CD4-positive, alpha-beta T cell (primary cell): ENCODE measurements at regions of chr15 and their contacts with region 1.

Region 1: GRCh38 chr15:64507293-64507802 is 47.0 kb downstream of the ZNF609 start:
- DNase-seq: peak in 11 of 14 experiments; percentile 5 to 60 (median 22)
- ATAC-seq: peak; percentile 67
- H3K4me3 ChIP-seq: no peak overlapping the region
- H3K4me3 Mint-ChIP-seq: peak overlapping the region; percentile 34
- H3K27ac ChIP-seq: peak overlapping the region; percentile 18 to 34
- H3K27ac Mint-ChIP-seq: peak overlapping the region; percentile 89
- H3K4me1 ChIP-seq: peaks cover 41% of the 10 kb centered on the region
- H3K4me1 Mint-ChIP-seq: peaks cover 87% of the 10 kb centered on the region
- H3K27me3 ChIP-seq: no peaks in the 10 kb centered on the region
- H3K27me3 Mint-ChIP-seq: no peaks in the 10 kb centered on the region
- CTCF ChIP-seq: no peak

Region 2: DNA sequence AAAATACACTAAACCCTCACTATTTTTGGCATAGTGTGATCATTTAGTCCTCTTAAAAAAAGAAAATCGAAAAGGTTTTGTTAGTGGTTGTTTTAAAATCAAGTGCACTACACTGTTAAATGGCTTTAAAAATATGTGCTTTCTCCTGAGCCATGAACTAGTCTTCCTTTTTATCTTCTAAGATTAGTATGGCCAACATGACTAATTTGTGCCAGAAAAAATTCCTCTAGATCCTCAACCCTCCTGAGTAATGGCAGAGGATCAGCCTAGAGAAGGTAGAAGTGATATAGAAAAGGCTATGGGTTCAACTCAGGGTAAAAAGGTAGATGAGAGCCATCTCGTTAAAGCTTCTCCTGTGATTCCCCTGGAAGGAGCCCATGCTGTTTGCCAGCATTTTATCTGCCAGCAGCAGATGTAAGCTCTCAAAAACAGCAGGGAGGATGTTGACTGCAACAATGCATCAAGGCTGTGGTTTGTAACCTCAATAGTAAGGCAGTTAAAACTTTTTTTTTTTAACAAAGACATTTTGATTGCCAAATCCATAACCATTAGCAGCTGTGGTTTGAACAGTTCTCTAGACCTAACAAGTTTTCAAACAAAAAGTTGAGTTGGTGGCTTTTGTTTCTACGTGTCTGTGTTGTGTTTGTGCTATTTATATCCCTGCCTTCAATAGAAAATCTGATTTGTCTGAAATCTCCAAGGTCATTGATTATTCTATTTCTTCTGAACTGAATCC is 77.2 kb before region 1 on chr15:
- CTCF ChIA-PET with region 1: no interaction called
- POLR2A ChIA-PET with region 1: interaction called, 12 read pairs
- intact Hi-C with region 1: loop called in 1 of 2 experiments (anchors 2 kb)
- DNase-seq: peak in 13 of 14 experiments; percentile 17 to 85 (median 37)
- ATAC-seq: peak; percentile 91
- H3K4me3 ChIP-seq: peak overlapping the region; percentile 12
- H3K4me3 Mint-ChIP-seq: peak overlapping the region; percentile 79
- H3K27ac ChIP-seq: peak overlapping the region; percentile 31 to 52
- H3K27ac Mint-ChIP-seq: peak overlapping the region; percentile 97
- H3K4me1 ChIP-seq: peaks cover 36% of the 10 kb centered on the region
- H3K4me1 Mint-ChIP-seq: peaks cover 52% of the 10 kb centered on the region
- H3K27me3 ChIP-seq: no peaks in the 10 kb centered on the region
- H3K27me3 Mint-ChIP-seq: no peaks in the 10 kb centered on the region
- CTCF ChIP-seq: no peak

Region 3: GRCh38 chr15:64460206-64460734 is 47.1 kb before region 1 on chr15 and contains the start of gene ZNF609:
- CTCF ChIA-PET with region 1: no interaction called
- POLR2A ChIA-PET with region 1: interaction called, 19 read pairs
- intact Hi-C with region 1: loop called in 1 of 2 experiments (anchors 5 kb)
- DNase-seq: peak; percentile 74 to 91 (median 86)
- ATAC-seq: peak; percentile 80
- H3K4me3 ChIP-seq: peak within 1 kb of the TSS; percentile 71
- H3K4me3 Mint-ChIP-seq: peak within 1 kb of the TSS; percentile 92
- H3K27ac ChIP-seq: peak within 1 kb of the TSS; percentile 52
- H3K27ac Mint-ChIP-seq: peak within 1 kb of the TSS; percentile 87
- H3K4me1 ChIP-seq: peaks cover 46% of the 10 kb centered on the region
- H3K4me1 Mint-ChIP-seq: peaks cover 88% of the 10 kb centered on the region
- H3K27me3 ChIP-seq: no peaks in the 10 kb centered on the region
- H3K27me3 Mint-ChIP-seq: no peaks in the 10 kb centered on the region
- CTCF ChIP-seq: no peak
- total RNA-seq, gene ZNF609: 62.4 to 65.3 TPM

Region 4: GRCh38 chr15:64490598-64491259 is 16.6 kb before region 1 on chr15:
- CTCF ChIA-PET with region 1: interaction called, 3 read pairs
- POLR2A ChIA-PET with region 1: interaction called, 11 read pairs
- intact Hi-C with region 1: no loop called
- DNase-seq: no peak
- ATAC-seq: no peak
- H3K4me3 ChIP-seq: no peak overlapping the region
- H3K4me3 Mint-ChIP-seq: no peak overlapping the region
- H3K27ac ChIP-seq: no peak overlapping the region
- H3K27ac Mint-ChIP-seq: peak overlapping the region; percentile 73
- H3K4me1 ChIP-seq: peaks cover 9% of the 10 kb centered on the region
- H3K4me1 Mint-ChIP-seq: peaks cover 65% of the 10 kb centered on the region
- H3K27me3 ChIP-seq: no peaks in the 10 kb centered on the region
- H3K27me3 Mint-ChIP-seq: no peaks in the 10 kb centered on the region
- CTCF ChIP-seq: no peak

Region 5: DNA sequence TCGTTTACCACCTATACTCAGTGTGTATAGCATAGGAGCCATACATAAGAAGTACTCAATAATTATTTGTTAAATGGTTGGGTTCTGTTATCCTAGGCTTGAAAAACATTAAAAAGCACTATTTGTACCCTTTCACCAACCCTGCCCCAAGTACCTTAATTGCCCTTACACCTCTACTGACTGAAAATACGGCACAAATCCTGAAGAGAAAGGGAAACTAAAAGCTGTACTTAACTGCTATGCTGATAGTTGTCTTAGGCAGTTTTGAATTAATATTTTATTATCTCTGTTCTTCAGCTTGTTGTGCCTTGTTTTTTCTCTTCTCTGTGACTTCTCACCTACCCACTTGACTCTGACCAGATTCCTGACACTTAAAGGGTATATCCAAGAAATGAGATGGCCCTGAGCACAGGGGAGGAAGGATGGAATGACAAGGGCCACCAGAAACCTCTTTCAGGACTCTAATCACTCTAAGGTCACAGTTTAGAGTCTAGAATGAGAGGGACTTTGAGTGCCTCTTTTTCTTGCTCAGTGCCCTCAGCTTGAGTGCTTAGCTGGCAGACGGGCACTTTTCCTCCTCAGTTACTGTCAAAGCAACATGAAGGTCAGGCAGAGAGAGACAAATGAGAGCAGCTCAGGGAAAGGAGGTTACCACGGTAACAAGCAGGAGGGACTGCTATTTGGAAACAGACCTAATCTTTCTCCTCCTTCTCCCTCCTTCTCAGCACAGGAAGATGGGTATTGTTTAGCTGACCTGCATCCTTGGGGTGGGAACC is 89.5 kb after region 1 on chr15:
- CTCF ChIA-PET with region 1: no interaction called
- POLR2A ChIA-PET with region 1: interaction called, 4 read pairs
- intact Hi-C with region 1: loop called in 1 of 2 experiments (anchors 5 kb)
- DNase-seq: peak in 9 of 14 experiments; percentile 2 to 71 (median 23)
- ATAC-seq: peak; percentile 77
- H3K4me3 ChIP-seq: peak overlapping the region; percentile 37
- H3K4me3 Mint-ChIP-seq: peak overlapping the region; percentile 88
- H3K27ac ChIP-seq: peak overlapping the region; percentile 65 to 72
- H3K27ac Mint-ChIP-seq: peak overlapping the region; percentile 92
- H3K4me1 ChIP-seq: peaks cover 33% of the 10 kb centered on the region
- H3K4me1 Mint-ChIP-seq: peaks cover 68% of the 10 kb centered on the region
- H3K27me3 ChIP-seq: no peaks in the 10 kb centered on the region
- H3K27me3 Mint-ChIP-seq: no peaks in the 10 kb centered on the region
- CTCF ChIP-seq: no peak

Region 6: GRCh38 chr15:64622410-64623260 is 115.3 kb after region 1 on chr15:
- CTCF ChIA-PET with region 1: no interaction called
- POLR2A ChIA-PET with region 1: interaction called, 4 read pairs
- intact Hi-C with region 1: loop called in 1 of 2 experiments (anchors 5 kb)
- DNase-seq: peak; percentile 12 to 83 (median 42)
- ATAC-seq: peak; percentile 80
- H3K4me3 ChIP-seq: peak overlapping the region; percentile 35
- H3K4me3 Mint-ChIP-seq: peak overlapping the region; percentile 81
- H3K27ac ChIP-seq: peak overlapping the region; percentile 13 to 59
- H3K27ac Mint-ChIP-seq: peak overlapping the region; percentile 86
- H3K4me1 ChIP-seq: peaks cover 86% of the 10 kb centered on the region
- H3K4me1 Mint-ChIP-seq: peaks cover 93% of the 10 kb centered on the region
- H3K27me3 ChIP-seq: no peaks in the 10 kb centered on the region
- H3K27me3 Mint-ChIP-seq: no peaks in the 10 kb centered on the region
- CTCF ChIP-seq: no peak